Posterior cingulate gyrus (tissue), 11 donors: ENCODE measurements at regions of chr21 and their contacts with region 1.

Region 1: DNA sequence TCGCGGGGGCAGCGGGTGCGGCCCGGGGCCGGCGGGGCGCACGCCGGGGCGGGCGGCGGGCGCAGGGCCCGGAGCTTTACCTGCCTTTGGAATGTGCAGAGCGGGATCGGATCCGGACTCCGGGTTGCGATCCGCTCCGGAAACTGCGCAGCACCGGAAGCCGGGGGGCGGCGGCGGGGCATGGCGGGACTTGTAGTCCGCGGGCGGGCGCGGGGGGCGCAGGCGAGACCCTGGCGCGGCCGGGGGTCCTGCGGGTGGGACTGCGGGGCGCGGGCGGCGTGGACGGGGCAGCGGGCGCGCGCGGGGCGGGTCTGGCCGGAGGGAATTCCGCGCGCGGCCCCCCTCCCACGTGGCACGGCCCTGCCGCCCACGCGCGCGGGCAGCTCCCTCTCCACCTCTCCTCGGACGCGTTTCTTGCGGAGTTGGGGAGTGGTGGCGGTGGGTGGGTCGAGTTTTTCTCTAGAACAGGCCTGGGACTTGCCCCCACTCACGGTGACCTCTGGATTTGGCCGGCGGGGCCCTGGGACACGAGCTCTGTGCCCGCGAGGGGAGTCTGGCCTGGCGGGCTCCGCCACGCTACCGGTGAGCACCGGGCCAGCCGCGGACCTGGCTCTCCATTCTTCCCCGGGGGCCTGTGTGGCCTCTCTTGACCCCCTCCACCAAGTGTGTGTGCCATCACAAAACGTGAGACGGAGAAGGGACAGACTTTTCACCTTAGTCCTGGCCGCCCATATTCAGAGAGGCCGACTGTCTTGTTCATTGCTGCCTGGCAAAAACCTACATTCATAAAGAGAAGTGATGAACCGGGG is at the start of gene PRDM15:
- DNase-seq: peak; percentile 77 to 98 (median 84)

Region 2: GRCh38 chr21:41957991-41958766 is 78.8 kb after region 1 on chr21:
- intact Hi-C with region 1: loop called (anchors 5 kb)
- DNase-seq: peak in 7 of 10 donors; percentile 29 to 91 (median 55)

Region 3: DNA sequence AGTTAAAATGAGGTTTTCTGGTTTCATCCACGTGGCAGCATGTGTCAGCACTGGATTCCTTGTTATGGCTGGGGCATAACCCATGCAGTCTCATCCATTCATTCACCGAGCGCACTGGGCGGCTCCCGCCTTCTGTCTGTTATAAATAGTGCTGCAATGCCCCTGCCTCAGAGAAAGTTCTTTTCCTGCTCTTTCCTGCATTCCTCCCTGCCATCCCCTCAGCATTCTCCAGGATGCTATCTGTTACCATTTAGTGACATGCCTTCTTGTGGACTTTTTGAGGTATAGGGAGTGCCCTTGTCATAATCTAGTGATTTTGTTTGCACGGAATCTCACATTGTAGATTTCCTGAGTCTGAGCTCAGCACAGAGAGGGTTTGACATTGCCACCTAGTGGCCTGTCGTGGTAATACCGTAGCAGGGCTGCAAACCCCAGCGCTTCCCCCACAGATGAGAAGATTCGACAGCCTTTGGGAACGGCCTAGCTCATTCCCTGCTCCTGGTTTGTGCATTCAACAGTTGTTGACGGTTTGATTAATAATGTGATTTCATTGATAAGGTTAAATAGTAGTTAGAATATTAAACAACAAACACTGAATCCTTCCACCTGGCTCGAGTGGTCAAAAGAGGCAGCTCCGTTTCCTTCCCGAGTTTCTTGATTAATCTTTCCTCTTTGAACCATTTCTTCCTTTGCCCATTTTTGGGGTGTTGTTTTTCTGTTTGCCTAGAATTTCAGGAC is 238.0 kb after region 1 on chr21:
- intact Hi-C with region 1: loop called (anchors 10 kb)
- DNase-seq: peak; percentile 68 to 96 (median 88)